Activated CD4-positive, alpha-beta T cell treated with anti-CD3 and anti-CD28 coated beads, Interleukin-2, amount 10 ng/mL, durations not matched to agents 24 days and 14 days (primary cell): ENCODE measurements at regions of chr18 and their contacts with region 1.

Region 1: GRCh38 chr18:2846636-2847364 is at the start of gene EMILIN2:
- DNase-seq: peak; percentile 80
- H3K4me3 Mint-ChIP-seq: peak within 1 kb of the TSS; percentile 88
- H3K27ac Mint-ChIP-seq: peak within 1 kb of the TSS; percentile 89
- H3K4me1 Mint-ChIP-seq: peaks cover 36% of the 10 kb centered on the region
- H3K27me3 Mint-ChIP-seq: peaks cover 49% of the 10 kb centered on the region
- total RNA-seq, gene EMILIN2: 32.4 and 35.5 TPM in 2 replicates

Region 2: DNA sequence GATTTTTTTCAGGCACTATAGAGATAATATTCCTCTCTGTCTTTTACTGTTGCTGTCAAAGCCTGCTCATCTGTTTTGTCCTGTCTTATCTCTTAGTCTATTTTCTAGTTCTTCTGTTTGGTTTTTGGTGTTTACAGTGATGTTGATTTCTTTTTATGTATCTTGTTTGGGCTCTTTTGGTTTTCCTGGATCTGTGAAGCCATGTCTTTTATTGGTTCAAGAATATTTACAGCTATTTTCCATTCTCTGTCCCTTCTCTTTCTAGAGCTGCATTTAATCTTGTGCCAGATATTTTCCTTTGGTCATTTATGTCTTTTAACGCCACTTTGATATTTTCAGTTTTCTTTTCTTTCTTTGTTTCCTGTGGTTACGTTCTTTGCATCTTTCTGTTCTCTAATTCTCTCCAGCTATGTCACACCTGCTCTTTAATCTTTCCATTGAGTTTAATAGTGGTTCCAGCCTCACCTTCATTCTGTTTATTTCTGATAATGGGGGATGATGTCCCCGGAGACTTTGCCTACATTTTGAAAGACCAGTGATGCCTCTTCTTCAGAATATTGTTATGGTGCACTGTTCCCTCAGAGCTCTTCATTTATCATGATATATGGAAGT is 159.3 kb before region 1 on chr18:
- intact Hi-C with region 1: loop called (anchors 5 kb)
- DNase-seq: no peak
- H3K4me3 Mint-ChIP-seq: peak overlapping the region; percentile 35
- H3K27ac Mint-ChIP-seq: peak overlapping the region; percentile 90
- H3K4me1 Mint-ChIP-seq: peaks cover 39% of the 10 kb centered on the region
- H3K27me3 Mint-ChIP-seq: no peaks in the 10 kb centered on the region

Region 3: GRCh38 chr18:2805970-2806943 is 40.5 kb before region 1 on chr18:
- intact Hi-C with region 1: loop called (anchors 5 kb)
- DNase-seq: peak; percentile 44
- H3K4me3 Mint-ChIP-seq: no peak overlapping the region
- H3K27ac Mint-ChIP-seq: no peak overlapping the region
- H3K4me1 Mint-ChIP-seq: peaks cover 3% of the 10 kb centered on the region
- H3K27me3 Mint-ChIP-seq: peaks cover under 1% of the 10 kb centered on the region

Region 4: GRCh38 chr18:2826581-2826980 is 20.2 kb before region 1 on chr18:
- intact Hi-C with region 1: no loop called
- DNase-seq: peak; percentile 34
- H3K4me3 Mint-ChIP-seq: no peak overlapping the region
- H3K27ac Mint-ChIP-seq: no peak overlapping the region
- H3K4me1 Mint-ChIP-seq: no peaks in the 10 kb centered on the region
- H3K27me3 Mint-ChIP-seq: peaks cover 11% of the 10 kb centered on the region

Region 5: DNA sequence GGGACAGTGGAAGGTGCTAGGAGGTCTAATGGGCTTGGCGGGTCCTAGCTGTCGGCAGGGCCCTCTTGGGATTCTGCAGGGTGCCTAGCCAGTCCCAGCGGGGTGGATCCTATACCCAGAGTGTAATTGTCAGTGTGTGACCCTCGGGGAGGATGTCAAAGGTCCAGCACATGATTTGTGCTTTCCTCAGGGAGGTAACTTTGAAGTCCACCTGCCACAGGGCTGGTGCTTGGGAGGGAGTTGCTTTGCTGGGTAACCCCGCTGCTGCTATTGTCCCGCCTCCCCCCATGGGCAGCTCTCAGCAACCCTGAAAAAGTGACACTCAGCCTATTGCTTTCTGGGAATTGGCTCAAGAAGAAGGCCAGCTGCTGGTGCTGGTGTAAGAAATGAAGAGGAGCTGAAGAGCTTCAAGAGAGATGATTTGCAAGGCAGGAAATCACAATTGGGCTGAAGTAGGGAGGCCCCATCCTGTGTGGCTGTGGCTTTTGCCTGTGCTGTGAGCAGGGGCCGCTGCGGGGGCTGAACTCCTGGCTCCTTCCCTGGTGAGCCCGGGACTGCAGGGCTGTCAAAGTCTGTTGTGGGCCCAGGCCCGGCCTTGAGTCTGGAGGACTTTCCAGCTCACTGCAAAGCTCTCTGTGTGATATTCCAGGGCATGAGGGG is 36.4 kb after region 1 on chr18:
- intact Hi-C with region 1: loop called (anchors 2 kb)
- DNase-seq: peak; percentile 87
- H3K4me3 Mint-ChIP-seq: peak overlapping the region; percentile 63
- H3K27ac Mint-ChIP-seq: peak overlapping the region; percentile 87
- H3K4me1 Mint-ChIP-seq: peaks cover 24% of the 10 kb centered on the region
- H3K27me3 Mint-ChIP-seq: no peaks in the 10 kb centered on the region